ENCODE measurements at regions of chr10 and their contacts with region 1.

Region 1: GRCh38 chr10:7525314-7526016 is 114.6 kb upstream of the SFMBT2 start:
- DNase-seq: peak; percentile 64
- ATAC-seq: peak; percentile 78
- H3K4me3 ChIP-seq: no peak overlapping the region
- H3K27ac ChIP-seq: no peak overlapping the region; the same call in 1 of the 2 replicates
- H3K4me1 ChIP-seq: peaks cover 13% of the 10 kb centered on the region
- H3K27me3 ChIP-seq: peaks cover 0 to 6% of the 10 kb centered on the region in 2 experiments; a peak in 1 of 4 replicates
- CTCF ChIP-seq: peak; percentile 69 to 93 (median 81)
- EP300 ChIP-seq: 0 out of 4 replicates have a peak, but pooled peaks of 1 of the 2 experiments have one; percentile 5
- POLR2A ChIP-seq: no peak
- RAD21 ChIP-seq: peak; percentile 95

Region 2: DNA sequence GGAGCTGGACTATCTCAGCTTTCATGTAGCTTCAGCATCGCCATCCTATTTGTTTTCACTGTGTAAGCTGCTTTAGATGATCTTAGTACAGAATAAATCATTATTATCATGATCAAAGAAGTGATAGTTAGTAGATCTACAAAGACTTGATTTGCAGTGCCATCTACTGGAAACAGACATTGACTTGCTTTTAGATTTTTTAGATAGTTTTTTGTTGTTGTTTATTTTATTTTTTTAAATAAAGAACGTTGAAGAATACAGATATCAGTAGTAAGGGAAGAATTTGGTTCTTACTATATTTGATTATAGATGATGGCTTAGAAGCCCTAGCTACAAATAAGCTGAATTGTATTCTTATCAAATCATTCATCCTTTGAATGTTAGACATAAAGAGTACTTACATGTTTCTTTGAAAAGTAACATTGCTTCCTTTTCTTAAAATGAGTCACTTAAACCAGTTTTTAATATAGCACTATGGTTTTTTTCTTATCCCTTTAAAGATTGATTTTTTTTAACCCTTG is 108.3 kb before region 1 on chr10:
- CTCF ChIA-PET with region 1: interaction called, 11 read pairs
- POLR2A ChIA-PET with region 1: no interaction called
- RAD21 ChIA-PET with region 1: interaction called, 10 read pairs
- SMC1A ChIA-PET with region 1: interaction called, 6 read pairs
- in situ Hi-C with region 1: no loop called
- intact Hi-C with region 1: loop called (anchors 5 kb)
- DNase-seq: no peak
- ATAC-seq: peak; percentile 40
- H3K4me3 ChIP-seq: no peak overlapping the region
- H3K27ac ChIP-seq: no peak overlapping the region
- H3K4me1 ChIP-seq: peaks cover 13% of the 10 kb centered on the region
- H3K27me3 ChIP-seq: no peaks in the 10 kb centered on the region
- CTCF ChIP-seq: peak; percentile 25 to 61 (median 53); a peak in 4 of 6 replicates
- EP300 ChIP-seq: no peak
- POLR2A ChIP-seq: no peak
- RAD21 ChIP-seq: peak; percentile 67

Region 3: GRCh38 chr10:7471720-7472367 is 53.6 kb before region 1 on chr10:
- CTCF ChIA-PET with region 1: interaction called, 13 read pairs
- POLR2A ChIA-PET with region 1: interaction called, 6 read pairs
- RAD21 ChIA-PET with region 1: interaction called, 12 read pairs
- SMC1A ChIA-PET with region 1: interaction called, 7 read pairs
- in situ Hi-C with region 1: no loop called
- intact Hi-C with region 1: loop called (anchors 2 kb)
- DNase-seq: peak; percentile 98
- ATAC-seq: peak; percentile 87
- H3K4me3 ChIP-seq: peak overlapping the region; percentile 51; the same call in 1 of the 2 replicates
- H3K27ac ChIP-seq: peak overlapping the region; percentile 88
- H3K4me1 ChIP-seq: peaks cover 67% of the 10 kb centered on the region
- H3K27me3 ChIP-seq: no peaks in the 10 kb centered on the region
- CTCF ChIP-seq: no peak
- EP300 ChIP-seq: peak; percentile 100
- POLR2A ChIP-seq: peak; percentile 51
- RAD21 ChIP-seq: 0 out of 2 replicates have a peak, but pooled peaks have one; percentile 10

Region 4: DNA sequence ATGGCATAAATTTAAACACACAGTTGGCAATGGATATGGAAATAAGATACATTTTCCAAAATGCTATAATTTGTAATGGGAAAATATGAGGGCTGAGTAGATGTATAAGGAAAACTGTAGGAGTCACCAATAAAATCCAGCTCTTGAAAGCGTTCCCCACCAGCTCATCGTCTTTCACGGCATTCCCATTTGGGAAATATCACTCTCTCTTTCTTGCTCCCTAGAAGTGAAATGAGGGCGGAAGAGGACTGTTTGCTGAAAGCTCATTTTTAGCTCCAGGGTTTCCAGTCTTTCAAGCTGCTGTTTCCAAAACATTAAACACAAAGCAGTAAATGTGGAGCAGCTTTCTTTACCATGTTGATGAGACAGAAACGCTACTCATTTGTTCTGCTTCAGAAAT is 10.0 kb before region 1 on chr10:
- CTCF ChIA-PET with region 1: interaction called, 18 read pairs
- POLR2A ChIA-PET with region 1: no interaction called
- RAD21 ChIA-PET with region 1: interaction called, 4 read pairs
- SMC1A ChIA-PET with region 1: interaction called, 7 read pairs
- in situ Hi-C with region 1: no loop called
- intact Hi-C with region 1: no loop called
- DNase-seq: no peak
- ATAC-seq: no peak
- H3K4me3 ChIP-seq: no peak overlapping the region
- H3K27ac ChIP-seq: no peak overlapping the region
- H3K4me1 ChIP-seq: peaks cover 8% of the 10 kb centered on the region
- H3K27me3 ChIP-seq: no peaks in the 10 kb centered on the region
- CTCF ChIP-seq: no peak
- EP300 ChIP-seq: no peak
- POLR2A ChIP-seq: no peak
- RAD21 ChIP-seq: no peak

Region 5: GRCh38 chr10:7787857-7788638 is 262.6 kb after region 1 on chr10 and contains the starts of genes ATP5F1C and KIN:
- CTCF ChIA-PET with region 1: interaction called, 10 read pairs
- POLR2A ChIA-PET with region 1: no interaction called
- RAD21 ChIA-PET with region 1: interaction called, 6 read pairs
- SMC1A ChIA-PET with region 1: no interaction called
- in situ Hi-C with region 1: no loop called
- intact Hi-C with region 1: loop called (anchors 10 kb)
- DNase-seq: peak; percentile 86
- ATAC-seq: peak; percentile 93
- H3K4me3 ChIP-seq: peak within 1 kb of the TSS; percentile 97
- H3K27ac ChIP-seq: peak within 1 kb of the TSS; percentile 88
- H3K4me1 ChIP-seq: no peaks in the 10 kb centered on the region; the same call in 1 of the 2 replicates
- H3K27me3 ChIP-seq: no peaks in the 10 kb centered on the region
- CTCF ChIP-seq: no peak
- EP300 ChIP-seq: no peak
- POLR2A ChIP-seq: peak; percentile 97
- RAD21 ChIP-seq: no peak
- polyA plus RNA-seq, gene ATP5F1C: 803 to 978 TPM
- polyA plus RNA-seq, gene KIN: 24.4 to 33.2 TPM

Region 6: GRCh38 chr10:8033812-8034465 is 508.5 kb after region 1 on chr10:
- CTCF ChIA-PET with region 1: no interaction called
- POLR2A ChIA-PET with region 1: no interaction called
- RAD21 ChIA-PET with region 1: no interaction called
- SMC1A ChIA-PET with region 1: no interaction called
- in situ Hi-C with region 1: no loop called
- intact Hi-C with region 1: no loop called
- DNase-seq: no peak
- ATAC-seq: no peak
- H3K4me3 ChIP-seq: no peak overlapping the region
- H3K27ac ChIP-seq: no peak overlapping the region
- H3K4me1 ChIP-seq: no peaks in the 10 kb centered on the region
- H3K27me3 ChIP-seq: peaks cover 15 to 24% of the 10 kb centered on the region in 2 experiments
- CTCF ChIP-seq: no peak
- EP300 ChIP-seq: no peak
- POLR2A ChIP-seq: no peak
- RAD21 ChIP-seq: no peak

Region 7: GRCh38 chr10:9302120-9302746 is 1776.8 kb after region 1 on chr10:
- CTCF ChIA-PET with region 1: interaction called, 4 read pairs
- POLR2A ChIA-PET with region 1: no interaction called
- RAD21 ChIA-PET with region 1: interaction called, 5 read pairs
- SMC1A ChIA-PET with region 1: no interaction called
- in situ Hi-C with region 1: loop called (anchors 5 kb)
- intact Hi-C with region 1: loop called (anchors 2 kb)
- DNase-seq: no peak
- ATAC-seq: peak; percentile 64
- H3K4me3 ChIP-seq: no peak overlapping the region
- H3K27ac ChIP-seq: no peak overlapping the region
- H3K4me1 ChIP-seq: no peaks in the 10 kb centered on the region
- H3K27me3 ChIP-seq: no peaks in the 10 kb centered on the region
- CTCF ChIP-seq: peak; percentile 15 to 44 (median 22); a peak in 2 of 6 replicates
- EP300 ChIP-seq: no peak
- POLR2A ChIP-seq: no peak
- RAD21 ChIP-seq: peak; percentile 54